Activated CD8-positive, alpha-beta T cell treated with anti-CD3 and anti-CD28 coated beads, Interleukin-2, amount 10 ng/mL, durations not matched to agents 7 days and 5 days (primary cell): ENCODE measurements at regions of chr14 and their contacts with region 1.

Region 1: DNA sequence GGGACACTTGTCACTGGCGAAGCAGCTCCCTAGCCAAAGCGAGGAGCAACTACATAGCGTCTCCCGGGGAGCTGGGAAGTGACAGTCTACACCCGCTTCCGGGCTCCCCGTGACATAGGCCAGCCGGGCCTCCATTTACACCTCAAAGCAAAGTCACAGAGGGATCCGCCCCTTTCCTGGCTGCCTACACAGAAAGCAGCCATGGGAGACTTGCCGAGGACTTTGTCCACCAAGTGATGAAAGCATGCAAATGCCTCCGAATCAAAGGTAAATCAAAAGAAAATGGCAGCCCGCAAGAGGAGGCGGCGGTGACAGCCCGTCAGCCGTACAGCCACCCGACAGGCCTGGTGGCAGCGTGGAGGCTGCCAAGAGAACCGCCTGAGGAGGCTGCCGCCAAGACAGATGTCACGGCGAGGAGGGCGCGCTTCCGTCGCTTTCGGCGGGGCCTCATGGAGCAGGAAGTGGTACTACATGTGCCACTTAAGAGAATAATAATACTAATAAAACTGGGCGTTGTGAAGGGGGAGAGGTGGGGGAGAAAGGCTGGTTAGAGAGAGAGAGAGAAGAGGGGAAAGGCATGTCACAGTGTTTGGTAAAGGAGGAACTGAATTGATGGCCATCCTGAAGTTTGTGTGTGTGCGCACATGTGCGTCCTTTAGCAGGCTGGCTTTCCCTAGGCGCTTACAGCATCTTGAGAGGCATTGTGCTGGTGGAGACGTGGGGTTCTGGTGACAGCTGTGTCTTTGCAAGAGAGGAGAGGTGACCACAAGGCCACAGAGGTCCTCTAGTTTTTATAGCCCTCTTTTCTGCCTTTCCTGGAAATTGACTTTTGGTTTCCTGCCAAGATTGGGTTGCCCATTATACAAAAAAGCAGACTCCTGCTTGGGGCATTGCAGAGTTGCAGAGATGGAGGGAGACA is 661.7 kb downstream of the VRK1 start:
- DNase-seq: peak; percentile 91
- ATAC-seq: peak; percentile 89
- H3K4me3 Mint-ChIP-seq: peak overlapping the region; percentile 86
- H3K27ac Mint-ChIP-seq: peak overlapping the region; percentile 98
- H3K4me1 Mint-ChIP-seq: peaks cover 58% of the 10 kb centered on the region
- H3K27me3 Mint-ChIP-seq: no peaks in the 10 kb centered on the region

Region 2: DNA sequence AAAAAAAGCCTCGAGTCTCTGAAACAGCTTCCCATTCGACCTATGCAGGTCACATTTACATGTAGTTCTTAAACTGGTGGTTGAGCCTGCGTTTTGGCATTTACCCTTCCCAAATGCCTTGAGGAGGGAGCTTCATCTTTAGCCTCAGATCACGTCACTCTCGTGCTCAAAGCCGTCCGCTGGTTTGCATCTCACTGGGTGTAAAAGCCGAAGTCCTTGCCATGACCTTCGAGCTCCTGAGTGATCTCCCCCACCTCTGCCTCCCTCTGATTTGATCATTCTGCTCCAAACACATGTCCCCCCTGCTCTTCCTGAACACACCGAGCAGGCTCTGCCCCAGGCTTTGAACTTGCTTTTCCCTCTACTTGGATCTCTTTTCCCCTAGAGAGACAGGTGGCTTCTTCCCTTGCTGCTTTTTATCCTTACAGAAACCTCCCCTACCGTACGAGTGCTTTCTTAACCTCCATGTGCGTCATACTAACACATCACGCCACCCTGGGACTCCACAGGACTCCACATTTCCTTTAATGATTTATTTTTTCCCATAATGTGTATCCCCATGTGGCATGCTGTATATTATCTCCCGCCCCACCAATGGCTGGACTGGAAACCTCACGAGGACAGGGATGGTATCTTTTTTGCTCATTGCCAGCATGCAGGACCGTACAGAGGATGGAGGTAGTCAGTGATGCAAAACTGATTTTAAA is 51.1 kb before region 1 on chr14:
- CTCF ChIA-PET with region 1: no interaction called
- POLR2A ChIA-PET with region 1: no interaction called
- DNase-seq: no peak
- ATAC-seq: no peak
- H3K4me3 Mint-ChIP-seq: no peak overlapping the region
- H3K27ac Mint-ChIP-seq: no peak overlapping the region
- H3K4me1 Mint-ChIP-seq: peaks cover 29% of the 10 kb centered on the region
- H3K27me3 Mint-ChIP-seq: peaks cover 3% of the 10 kb centered on the region

Region 3: GRCh38 chr14:97442363-97442762 is 16.6 kb before region 1 on chr14:
- CTCF ChIA-PET with region 1: interaction called, 4 read pairs
- POLR2A ChIA-PET with region 1: interaction called, 16 read pairs
- DNase-seq: peak; percentile 49
- ATAC-seq: peak; percentile 62
- H3K4me3 Mint-ChIP-seq: no peak overlapping the region
- H3K27ac Mint-ChIP-seq: peak overlapping the region; percentile 86
- H3K4me1 Mint-ChIP-seq: peaks cover 29% of the 10 kb centered on the region
- H3K27me3 Mint-ChIP-seq: peaks cover under 1% of the 10 kb centered on the region